ENCODE measurements at regions of chr1 and their contacts with region 1.

Region 1: GRCh38 chr1:172554915-172555314 is 22.0 kb downstream of the SUCO start:
- DNase-seq: no peak
- ATAC-seq: no peak
- H3K4me3 ChIP-seq: no peak overlapping the region
- H3K4me3 Mint-ChIP-seq: no peak overlapping the region
- H3K27ac ChIP-seq: no peak overlapping the region
- H3K27ac Mint-ChIP-seq: no peak overlapping the region
- H3K4me1 ChIP-seq: no peaks in the 10 kb centered on the region
- H3K4me1 Mint-ChIP-seq: peaks cover 19% of the 10 kb centered on the region
- H3K27me3 ChIP-seq: no peaks in the 10 kb centered on the region
- H3K27me3 Mint-ChIP-seq: no peaks in the 10 kb centered on the region
- CTCF ChIP-seq: no peak

Region 2: GRCh38 chr1:172466795-172467407 is 88.0 kb before region 1 on chr1:
- CTCF ChIA-PET with region 1: no interaction called
- POLR2A ChIA-PET with region 1: no interaction called
- intact Hi-C with region 1: no loop called
- DNase-seq: no peak
- ATAC-seq: no peak
- H3K4me3 ChIP-seq: no peak overlapping the region
- H3K4me3 Mint-ChIP-seq: no peak overlapping the region
- H3K27ac ChIP-seq: no peak overlapping the region
- H3K27ac Mint-ChIP-seq: no peak overlapping the region
- H3K4me1 ChIP-seq: no peaks in the 10 kb centered on the region
- H3K4me1 Mint-ChIP-seq: no peaks in the 10 kb centered on the region
- H3K27me3 ChIP-seq: no peaks in the 10 kb centered on the region
- H3K27me3 Mint-ChIP-seq: no peaks in the 10 kb centered on the region
- CTCF ChIP-seq: no peak

Region 3: DNA sequence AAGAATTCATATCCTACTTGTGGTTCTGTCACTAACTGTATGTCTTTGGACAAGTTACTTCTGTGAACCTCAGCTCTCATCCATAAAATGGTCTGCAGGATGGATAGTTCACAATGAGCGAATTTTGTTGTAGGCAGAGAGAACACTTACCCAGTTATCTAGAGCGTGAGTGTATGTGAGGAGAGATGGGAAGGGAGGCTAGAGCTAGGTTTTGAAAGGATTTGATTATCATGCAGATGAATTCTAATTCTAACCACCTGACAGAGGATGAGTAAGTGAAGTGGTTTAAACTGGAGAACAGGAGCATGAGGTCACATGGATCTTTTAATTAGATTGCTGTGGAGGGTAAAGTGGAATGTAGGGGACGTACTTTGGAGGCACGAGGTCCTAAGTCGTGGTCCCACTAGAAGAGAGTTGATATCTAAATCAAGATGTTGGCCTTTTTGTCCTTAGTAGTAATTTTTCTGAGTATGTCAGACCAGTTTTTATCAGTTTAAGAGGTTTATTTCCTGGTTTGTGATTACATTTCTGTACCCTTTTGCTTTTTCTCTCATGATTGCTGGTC is 17.0 kb before region 1 on chr1:
- CTCF ChIA-PET with region 1: no interaction called
- POLR2A ChIA-PET with region 1: no interaction called
- intact Hi-C with region 1: loop called in 1 of 2 experiments (anchors 2 kb)
- DNase-seq: no peak
- ATAC-seq: no peak
- H3K4me3 ChIP-seq: no peak overlapping the region
- H3K4me3 Mint-ChIP-seq: peak overlapping the region; percentile 18
- H3K27ac ChIP-seq: no peak overlapping the region
- H3K27ac Mint-ChIP-seq: no peak overlapping the region
- H3K4me1 ChIP-seq: peaks cover 13% of the 10 kb centered on the region
- H3K4me1 Mint-ChIP-seq: peaks cover 79% of the 10 kb centered on the region
- H3K27me3 ChIP-seq: no peaks in the 10 kb centered on the region
- H3K27me3 Mint-ChIP-seq: no peaks in the 10 kb centered on the region
- CTCF ChIP-seq: no peak

Measured in CD4-positive, alpha-beta T cell (primary cell).